Activated B cell treated with CpG ODN at 0.5 μM for 24 hours (primary cell): ENCODE measurements at regions of chr11 and their contacts with region 1.

Region 1: DNA sequence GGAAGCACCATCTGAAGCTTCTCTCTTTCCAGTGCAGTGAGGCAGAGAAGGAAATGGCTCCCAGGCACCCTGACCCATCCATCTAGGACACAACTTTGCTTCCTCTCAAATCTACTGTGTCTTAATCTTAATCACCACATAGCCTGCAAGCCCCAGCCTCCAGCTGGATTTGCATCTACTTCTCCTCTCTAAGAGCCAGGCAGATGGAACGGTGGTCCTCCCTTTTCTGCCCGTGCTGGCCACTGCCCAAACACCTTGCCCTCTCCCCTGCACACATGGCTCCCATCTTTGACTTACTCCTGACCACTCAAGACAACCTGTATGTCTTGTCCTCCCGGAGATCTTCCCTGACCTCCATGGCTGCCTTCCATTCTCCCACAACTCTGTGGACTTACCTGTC is 7.4 kb downstream of the MS4A10 start:
- DNase-seq: no peak
- ATAC-seq: no peak
- H3K4me3 Mint-ChIP-seq: no peak overlapping the region
- H3K27ac Mint-ChIP-seq: no peak overlapping the region
- H3K4me1 Mint-ChIP-seq: no peaks in the 10 kb centered on the region
- H3K27me3 Mint-ChIP-seq: no peaks in the 10 kb centered on the region
- CTCF ChIP-seq: no peak

Region 2: GRCh38 chr11:59728913-59729312 is 1063.6 kb before region 1 on chr11:
- CTCF ChIA-PET with region 1: no interaction called
- POLR2A ChIA-PET with region 1: no interaction called
- intact Hi-C with region 1: no loop called
- DNase-seq: no peak
- ATAC-seq: no peak
- H3K4me3 Mint-ChIP-seq: no peak overlapping the region
- H3K27ac Mint-ChIP-seq: no peak overlapping the region
- H3K4me1 Mint-ChIP-seq: no peaks in the 10 kb centered on the region
- H3K27me3 Mint-ChIP-seq: peaks cover 9% of the 10 kb centered on the region
- CTCF ChIP-seq: no peak

Region 3: GRCh38 chr11:60813324-60813723 is 20.8 kb after region 1 on chr11:
- CTCF ChIA-PET with region 1: no interaction called
- POLR2A ChIA-PET with region 1: no interaction called
- intact Hi-C with region 1: loop called (anchors 2 kb)
- DNase-seq: no peak
- ATAC-seq: no peak
- H3K4me3 Mint-ChIP-seq: no peak overlapping the region
- H3K27ac Mint-ChIP-seq: no peak overlapping the region
- H3K4me1 Mint-ChIP-seq: no peaks in the 10 kb centered on the region
- H3K27me3 Mint-ChIP-seq: peaks cover 18% of the 10 kb centered on the region
- CTCF ChIP-seq: no peak